Activated CD4-positive, alpha-beta memory T cell treated with anti-CD3 and anti-CD28 coated beads for 36 hours (primary cell): ENCODE measurements at regions of chr10 and their contacts with region 1.

Region 1: GRCh38 chr10:124418726-124419501 is at the start of gene OAT:
- DNase-seq: peak; percentile 97
- H3K4me3 Mint-ChIP-seq: peak within 1 kb of the TSS; percentile 79
- H3K27ac Mint-ChIP-seq: no peak within 1 kb of the TSS
- H3K4me1 Mint-ChIP-seq: peaks cover 16% of the 10 kb centered on the region
- H3K27me3 Mint-ChIP-seq: peaks cover 7% of the 10 kb centered on the region
- total RNA-seq, gene OAT: 34.6 to 38.1 TPM

Region 2: DNA sequence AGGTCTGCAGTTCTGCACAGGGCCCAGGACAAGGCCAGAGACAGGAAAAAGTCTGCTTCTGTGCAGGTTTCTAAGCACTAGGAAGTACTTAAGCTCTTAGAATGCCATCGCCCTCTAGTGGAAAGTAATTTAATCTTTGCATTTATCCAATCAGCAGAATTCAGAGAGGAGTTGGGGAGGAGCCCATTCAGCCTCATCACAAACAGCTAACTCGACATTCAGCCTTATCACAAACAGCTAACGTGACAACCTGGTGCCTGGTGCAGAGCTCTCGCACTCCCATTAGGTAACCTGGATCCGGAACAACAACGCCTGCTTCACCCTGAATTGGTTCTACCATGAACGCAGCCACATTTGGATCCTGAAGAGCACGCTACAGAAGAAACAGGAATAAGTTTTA is 15.4 kb before region 1 on chr10:
- CTCF ChIA-PET with region 1: interaction called, 17 read pairs
- POLR2A ChIA-PET with region 1: no interaction called
- intact Hi-C with region 1: no loop called
- DNase-seq: peak; percentile 25
- H3K4me3 Mint-ChIP-seq: no peak overlapping the region
- H3K27ac Mint-ChIP-seq: no peak overlapping the region
- H3K4me1 Mint-ChIP-seq: peaks cover 8% of the 10 kb centered on the region
- H3K27me3 Mint-ChIP-seq: no peaks in the 10 kb centered on the region

Region 3: GRCh38 chr10:124641282-124642087 is 222.6 kb after region 1 on chr10:
- CTCF ChIA-PET with region 1: no interaction called
- POLR2A ChIA-PET with region 1: no interaction called
- intact Hi-C with region 1: no loop called
- DNase-seq: peak; percentile 76
- H3K4me3 Mint-ChIP-seq: peak overlapping the region; percentile 54
- H3K27ac Mint-ChIP-seq: peak overlapping the region; percentile 94
- H3K4me1 Mint-ChIP-seq: peaks cover 78% of the 10 kb centered on the region
- H3K27me3 Mint-ChIP-seq: no peaks in the 10 kb centered on the region